ENCODE measurements at regions of chr14 and their contacts with region 1.

Region 1: GRCh38 chr14:57871459-57872080 is 5.7 kb upstream of the SLC35F4 start:
- DNase-seq: peak; percentile 45
- ATAC-seq: no peak
- H3K4me3 Mint-ChIP-seq: no peak overlapping the region
- H3K27ac Mint-ChIP-seq: no peak overlapping the region
- H3K4me1 Mint-ChIP-seq: no peaks in the 10 kb centered on the region
- H3K27me3 Mint-ChIP-seq: peaks cover 18% of the 10 kb centered on the region

Region 2: DNA sequence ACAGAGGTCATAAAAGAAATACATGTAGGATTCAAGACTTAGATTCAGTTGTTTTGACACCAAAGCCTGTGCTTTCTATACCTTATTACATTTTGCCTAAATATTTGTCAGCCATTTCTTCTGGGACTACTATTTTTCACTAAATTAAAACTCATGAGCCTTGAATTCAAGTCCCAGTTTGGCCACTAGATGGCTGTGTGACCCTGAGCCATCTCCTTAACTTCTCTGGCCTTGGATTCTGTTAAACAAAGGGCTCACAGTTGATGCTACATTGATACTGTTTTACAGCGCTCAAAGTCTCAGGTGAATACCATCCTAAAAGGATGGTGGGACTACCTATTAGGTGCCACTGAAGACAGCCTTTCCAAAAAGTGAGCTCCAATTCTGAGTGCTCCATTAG is 338.4 kb before region 1 on chr14:
- CTCF ChIA-PET with region 1: no interaction called
- POLR2A ChIA-PET with region 1: no interaction called
- intact Hi-C with region 1: loop called in 1 of 2 experiments (anchors 5 kb)
- DNase-seq: peak; percentile 35
- ATAC-seq: no peak
- H3K4me3 Mint-ChIP-seq: no peak overlapping the region
- H3K27ac Mint-ChIP-seq: no peak overlapping the region
- H3K4me1 Mint-ChIP-seq: no peaks in the 10 kb centered on the region
- H3K27me3 Mint-ChIP-seq: peaks cover 8% of the 10 kb centered on the region

Region 3: DNA sequence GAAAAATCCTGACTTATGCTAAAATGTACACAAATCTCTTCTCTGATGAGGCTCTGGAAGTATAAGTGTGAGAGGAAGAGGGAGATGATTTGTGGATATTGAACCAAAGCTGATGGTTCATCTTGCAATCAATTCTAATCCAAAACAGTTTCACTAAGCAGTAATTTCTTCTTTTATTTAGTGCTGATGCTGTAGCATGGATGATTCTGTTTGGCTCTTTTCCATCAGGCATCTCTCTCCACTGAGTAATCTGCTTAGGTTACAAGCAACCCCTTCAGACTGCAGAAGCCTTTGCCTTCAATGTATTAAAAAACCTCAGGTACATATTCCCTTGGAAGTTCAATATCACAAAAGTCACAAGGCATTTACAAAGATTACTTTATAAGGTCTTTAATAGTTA is 218.8 kb before region 1 on chr14:
- CTCF ChIA-PET with region 1: no interaction called
- POLR2A ChIA-PET with region 1: no interaction called
- intact Hi-C with region 1: no loop called
- DNase-seq: no peak
- ATAC-seq: no peak
- H3K4me3 Mint-ChIP-seq: no peak overlapping the region
- H3K27ac Mint-ChIP-seq: no peak overlapping the region
- H3K4me1 Mint-ChIP-seq: no peaks in the 10 kb centered on the region
- H3K27me3 Mint-ChIP-seq: no peaks in the 10 kb centered on the region

Region 4: GRCh38 chr14:57692671-57693070 is 178.9 kb before region 1 on chr14:
- CTCF ChIA-PET with region 1: no interaction called
- POLR2A ChIA-PET with region 1: no interaction called
- intact Hi-C with region 1: loop called in 1 of 2 experiments (anchors 1 kb)
- DNase-seq: no peak
- ATAC-seq: no peak
- H3K4me3 Mint-ChIP-seq: no peak overlapping the region
- H3K27ac Mint-ChIP-seq: no peak overlapping the region
- H3K4me1 Mint-ChIP-seq: no peaks in the 10 kb centered on the region
- H3K27me3 Mint-ChIP-seq: peaks cover 2% of the 10 kb centered on the region

Region 5: DNA sequence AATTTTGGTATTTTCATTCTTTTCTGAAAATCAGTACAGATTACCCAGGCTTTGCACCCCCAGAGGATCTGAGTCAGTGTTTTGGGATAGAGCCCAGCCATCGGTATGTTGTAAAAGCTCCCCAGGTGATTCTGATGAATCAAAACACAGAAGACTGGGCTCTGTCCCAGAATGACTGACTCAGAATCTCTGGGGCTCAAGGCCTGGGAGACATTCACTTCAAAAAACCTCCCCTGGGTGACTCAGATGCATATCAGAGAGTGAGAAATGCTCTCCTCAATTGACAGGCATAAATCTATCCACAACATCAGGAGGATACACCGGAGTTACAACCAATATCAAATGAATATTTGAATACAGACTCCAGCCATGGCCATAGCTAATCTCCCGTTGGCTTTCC is 38.2 kb before region 1 on chr14:
- CTCF ChIA-PET with region 1: no interaction called
- POLR2A ChIA-PET with region 1: no interaction called
- intact Hi-C with region 1: no loop called
- DNase-seq: no peak
- ATAC-seq: peak; percentile 49
- H3K4me3 Mint-ChIP-seq: no peak overlapping the region
- H3K27ac Mint-ChIP-seq: no peak overlapping the region
- H3K4me1 Mint-ChIP-seq: no peaks in the 10 kb centered on the region
- H3K27me3 Mint-ChIP-seq: peaks cover 5% of the 10 kb centered on the region

Measured in activated CD4-positive, alpha-beta T cell treated with anti-CD3 and anti-CD28 coated beads for 36 hours (primary cell).